Heart left ventricle (tissue), 16 donors: ENCODE measurements at regions of chr1 and their contacts with region 1.

Region 1: DNA sequence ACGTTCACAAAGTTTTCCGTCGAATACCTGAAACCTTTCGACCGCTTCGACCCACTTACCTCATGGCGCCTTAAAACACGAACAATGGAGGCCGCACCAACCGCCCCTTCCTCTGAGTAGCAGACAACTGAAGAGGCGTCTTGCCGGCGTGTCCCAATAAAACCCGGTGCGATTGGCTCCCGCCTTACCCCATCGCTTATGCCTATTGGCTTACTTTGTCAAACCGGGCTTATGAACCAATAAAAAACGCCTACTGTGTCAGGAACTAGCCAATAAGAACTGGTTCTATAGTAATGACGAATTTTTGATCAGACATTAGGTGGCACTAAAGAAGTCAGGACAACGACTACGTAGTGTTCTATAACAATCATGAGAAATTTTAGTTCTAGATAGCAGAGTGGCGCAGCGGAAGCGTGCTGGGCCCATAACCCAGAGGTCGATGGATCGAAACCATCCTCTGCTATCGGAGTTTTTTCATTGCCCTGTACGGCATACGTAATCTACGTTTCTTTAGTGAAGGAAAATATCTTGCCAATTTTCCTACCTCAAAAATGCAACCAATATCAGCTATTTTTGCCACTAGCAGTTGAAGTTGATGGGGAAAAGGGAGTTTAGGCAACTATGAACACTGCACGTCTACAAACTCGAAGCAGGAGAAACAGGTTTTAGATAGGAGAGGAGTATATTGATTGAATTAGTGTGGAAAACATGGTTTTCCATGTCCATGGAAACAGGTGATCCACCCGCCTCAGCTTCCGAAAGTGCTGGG is at the start of gene ILF2:
- DNase-seq: peak; percentile 97 to 98 (median 98)
- ATAC-seq: peak; percentile 95 to 98 (median 97)
- H3K4me3 ChIP-seq: peak within 1 kb of the TSS; percentile 49 to 93 (median 82)
- H3K27ac ChIP-seq: peak within 1 kb of the TSS; percentile 6 to 90 (median 80)
- H3K4me1 ChIP-seq: peaks cover 6 to 26% (median 14%) of the 10 kb centered on the region in 12 donors
- H3K27me3 ChIP-seq: no peaks in the 10 kb centered on the region
- CTCF ChIP-seq: peak in 6 of 12 donors; percentile 11 to 53 (median 39)
- POLR2A ChIP-seq: peak; percentile 81 to 91
- total RNA-seq, gene ILF2: 65.0 to 92.3 (median 74.2) TPM

Region 2: GRCh38 chr1:153510984-153511410 is 160.0 kb before region 1 on chr1:
- intact Hi-C with region 1: loop called in 1 of 10 experiments (anchors 10 kb)
- DNase-seq: peak; percentile 82 to 88 (median 84)
- ATAC-seq: peak; percentile 60 to 62 (median 60)
- H3K4me3 ChIP-seq: no peak overlapping the region
- H3K27ac ChIP-seq: no peak overlapping the region
- H3K4me1 ChIP-seq: peaks cover 0 to 32% (median 21%) of the 10 kb centered on the region in 12 donors
- H3K27me3 ChIP-seq: no peaks in the 10 kb centered on the region
- CTCF ChIP-seq: peak; percentile 81 to 97 (median 90)
- POLR2A ChIP-seq: no peak

Region 3: GRCh38 chr1:153627797-153628626 is 43.0 kb before region 1 on chr1 and contains the start of gene S100A1:
- intact Hi-C with region 1: loop called in 5 of 10 experiments (anchors 2 to 5 kb)
- DNase-seq: peak; percentile 77 to 87 (median 82)
- ATAC-seq: peak; percentile 45 to 72 (median 58)
- H3K4me3 ChIP-seq: peak within 1 kb of the TSS; percentile 38 to 87 (median 62)
- H3K27ac ChIP-seq: peak within 1 kb of the TSS; percentile 84 to 97 (median 94)
- H3K4me1 ChIP-seq: peaks cover 2 to 72% (median 49%) of the 10 kb centered on the region in 12 donors
- H3K27me3 ChIP-seq: no peaks in the 10 kb centered on the region
- CTCF ChIP-seq: peak in 2 of 12 donors; percentile 29 to 31
- POLR2A ChIP-seq: no peak
- total RNA-seq, gene S100A1: 1,023 to 2,291 (median 2,114) TPM

Region 4: GRCh38 chr1:153633716-153634665 is 37.1 kb before region 1 on chr1 and contains the start of gene CHTOP:
- intact Hi-C with region 1: loop called in 5 of 10 experiments (anchors 2 to 5 kb)
- DNase-seq: peak; percentile 97 to 98 (median 98)
- ATAC-seq: peak; percentile 90 to 94 (median 93)
- H3K4me3 ChIP-seq: peak within 1 kb of the TSS; percentile 64 to 99 (median 82)
- H3K27ac ChIP-seq: peak within 1 kb of the TSS; percentile 99 to 100 (median 100)
- H3K4me1 ChIP-seq: peaks cover 4 to 82% (median 51%) of the 10 kb centered on the region in 12 donors
- H3K27me3 ChIP-seq: no peaks in the 10 kb centered on the region
- CTCF ChIP-seq: no peak
- POLR2A ChIP-seq: peak; percentile 56 to 95
- total RNA-seq, gene CHTOP: 48.4 to 92.0 (median 67.7) TPM

Region 5: GRCh38 chr1:153711006-153711405 is 40.0 kb after region 1 on chr1:
- intact Hi-C with region 1: no loop called
- DNase-seq: no peak
- ATAC-seq: no peak
- H3K4me3 ChIP-seq: no peak overlapping the region
- H3K27ac ChIP-seq: no peak overlapping the region
- H3K4me1 ChIP-seq: no peaks in the 10 kb centered on the region
- H3K27me3 ChIP-seq: peaks cover 0 to 3% (median 0%) of the 10 kb centered on the region in 9 donors
- CTCF ChIP-seq: no peak
- POLR2A ChIP-seq: no peak

Region 6: DNA sequence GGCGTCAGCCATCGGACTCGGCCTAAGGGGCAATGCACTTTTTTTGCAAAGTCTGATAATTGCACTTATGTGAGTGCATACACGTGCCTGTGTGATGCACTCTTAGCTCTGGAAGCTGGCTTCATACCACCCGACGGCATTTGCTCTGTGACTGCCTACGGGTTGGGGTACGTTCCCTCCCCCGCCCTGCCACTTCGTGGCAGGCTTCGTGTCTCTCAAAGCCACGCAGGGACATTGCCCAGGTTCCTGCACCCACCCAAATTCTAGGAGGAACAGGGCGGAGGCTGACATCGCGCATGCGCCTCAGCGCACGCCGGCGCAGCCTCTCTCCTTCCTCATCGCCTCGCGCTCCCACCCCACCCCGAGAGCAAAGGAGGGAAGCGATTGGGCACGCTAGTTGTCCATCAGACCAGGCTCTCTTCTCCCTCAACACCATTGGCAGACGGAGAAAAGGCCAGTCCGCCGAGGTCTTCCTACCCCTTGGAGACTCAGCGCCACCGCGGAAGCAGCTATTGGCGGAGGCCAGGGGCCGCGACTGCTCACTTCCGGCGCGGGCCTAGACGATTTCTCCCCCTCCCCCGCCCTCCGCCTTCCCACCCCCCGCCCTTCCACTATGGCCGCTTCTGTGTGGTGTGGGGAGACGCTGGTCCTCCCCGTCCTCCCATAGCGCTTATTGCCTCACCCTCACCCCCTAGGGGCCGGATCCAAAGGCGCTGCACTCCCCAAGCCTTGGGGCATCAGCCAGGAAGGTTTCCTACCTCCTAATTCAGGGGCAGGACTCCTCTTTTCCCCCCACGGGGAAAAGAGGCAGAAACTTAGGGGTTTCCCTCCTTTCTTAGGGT is 56.6 kb after region 1 on chr1 and contains the start of gene INTS3:
- intact Hi-C with region 1: loop called in 3 of 10 experiments (anchors 2 to 5 kb)
- DNase-seq: peak; percentile 100
- ATAC-seq: peak; percentile 99 to 100 (median 100)
- H3K4me3 ChIP-seq: peak within 1 kb of the TSS; percentile 44 to 98 (median 82)
- H3K27ac ChIP-seq: peak within 1 kb of the TSS; percentile 86 to 100 (median 98)
- H3K4me1 ChIP-seq: peaks cover 0 to 38% (median 22%) of the 10 kb centered on the region in 12 donors
- H3K27me3 ChIP-seq: no peaks in the 10 kb centered on the region
- CTCF ChIP-seq: peak in 3 of 12 donors; percentile 13 to 25 (median 14)
- POLR2A ChIP-seq: no peak
- total RNA-seq, gene INTS3: 19.6 to 33.2 (median 30.7) TPM

Region 7: DNA sequence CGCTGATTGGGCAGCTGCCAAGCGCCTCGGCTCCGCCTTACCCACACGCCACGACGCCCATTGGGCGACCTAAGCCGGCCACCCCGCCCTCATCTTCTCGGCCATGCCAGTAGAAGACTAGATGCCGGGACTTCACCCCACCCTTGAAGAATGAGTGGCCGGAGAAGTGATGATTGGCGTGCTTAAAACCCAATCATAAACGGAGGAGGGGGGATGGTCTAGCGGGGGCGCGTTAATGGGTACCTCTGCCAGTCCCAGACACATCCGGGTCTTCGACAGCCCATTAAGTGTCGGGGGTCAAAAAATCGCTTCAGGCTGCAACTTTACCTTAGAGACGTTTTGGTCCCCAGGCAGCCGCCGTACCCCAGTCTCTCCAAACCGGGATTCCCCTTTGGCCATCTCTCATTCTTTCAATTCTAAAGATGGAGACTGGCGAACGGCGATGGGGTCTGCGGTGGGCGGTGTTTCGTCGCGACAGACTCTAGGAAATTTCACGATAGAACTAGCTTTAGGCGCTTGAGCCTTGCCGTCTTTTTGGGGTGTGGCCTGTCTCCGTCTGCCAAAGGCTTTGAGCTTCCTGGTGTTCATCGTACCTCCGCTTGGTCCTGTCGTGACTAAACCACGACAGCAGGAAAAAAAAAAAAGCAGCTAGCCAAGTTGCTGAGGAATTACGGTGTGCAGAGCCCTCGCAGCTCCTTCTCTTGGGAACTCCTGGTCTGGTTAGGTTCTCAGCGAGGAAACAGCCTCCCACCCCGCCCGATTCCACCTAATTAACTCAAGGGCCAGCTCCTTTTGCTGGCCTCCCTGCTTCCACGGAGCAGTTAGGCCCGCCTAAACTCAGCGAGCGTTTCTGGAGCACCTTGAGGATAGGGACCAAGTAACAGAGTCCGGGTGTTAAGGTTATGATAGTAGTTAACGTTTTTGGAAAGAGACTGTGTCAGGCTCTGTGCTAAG is 252.2 kb after region 1 on chr1 and contains the start of gene GATAD2B:
- intact Hi-C with region 1: loop called in 1 of 10 experiments (anchors 10 kb)
- DNase-seq: peak; percentile 100
- ATAC-seq: peak; percentile 98
- H3K4me3 ChIP-seq: peak within 1 kb of the TSS; percentile 53 to 89 (median 78)
- H3K27ac ChIP-seq: peak within 1 kb of the TSS; percentile 76 to 97 (median 90)
- H3K4me1 ChIP-seq: peaks cover 2 to 45% (median 36%) of the 10 kb centered on the region in 12 donors
- H3K27me3 ChIP-seq: no peaks in the 10 kb centered on the region
- CTCF ChIP-seq: no peak
- POLR2A ChIP-seq: peak in 1 of 2 donors; percentile 43
- total RNA-seq, gene GATAD2B: 18.1 to 53.9 (median 46.2) TPM